ENCODE measurements at regions of chr3 and their contacts with region 1.

Region 1: GRCh38 chr3:170405101-170405500 is 13.6 kb upstream of the CLDN11 start:
- DNase-seq: no peak
- H3K4me3 ChIP-seq: no peak overlapping the region
- H3K4me3 Mint-ChIP-seq: no peak overlapping the region
- H3K27ac ChIP-seq: no peak overlapping the region
- H3K27ac Mint-ChIP-seq: no peak overlapping the region
- H3K4me1 ChIP-seq: no peaks in the 10 kb centered on the region
- H3K4me1 Mint-ChIP-seq: no peaks in the 10 kb centered on the region
- H3K27me3 ChIP-seq: no peaks in the 10 kb centered on the region
- H3K27me3 Mint-ChIP-seq: peaks cover 0 to 2% (median 0%) of the 10 kb centered on the region in 3 donors
- CTCF ChIP-seq: no peak

Region 2: DNA sequence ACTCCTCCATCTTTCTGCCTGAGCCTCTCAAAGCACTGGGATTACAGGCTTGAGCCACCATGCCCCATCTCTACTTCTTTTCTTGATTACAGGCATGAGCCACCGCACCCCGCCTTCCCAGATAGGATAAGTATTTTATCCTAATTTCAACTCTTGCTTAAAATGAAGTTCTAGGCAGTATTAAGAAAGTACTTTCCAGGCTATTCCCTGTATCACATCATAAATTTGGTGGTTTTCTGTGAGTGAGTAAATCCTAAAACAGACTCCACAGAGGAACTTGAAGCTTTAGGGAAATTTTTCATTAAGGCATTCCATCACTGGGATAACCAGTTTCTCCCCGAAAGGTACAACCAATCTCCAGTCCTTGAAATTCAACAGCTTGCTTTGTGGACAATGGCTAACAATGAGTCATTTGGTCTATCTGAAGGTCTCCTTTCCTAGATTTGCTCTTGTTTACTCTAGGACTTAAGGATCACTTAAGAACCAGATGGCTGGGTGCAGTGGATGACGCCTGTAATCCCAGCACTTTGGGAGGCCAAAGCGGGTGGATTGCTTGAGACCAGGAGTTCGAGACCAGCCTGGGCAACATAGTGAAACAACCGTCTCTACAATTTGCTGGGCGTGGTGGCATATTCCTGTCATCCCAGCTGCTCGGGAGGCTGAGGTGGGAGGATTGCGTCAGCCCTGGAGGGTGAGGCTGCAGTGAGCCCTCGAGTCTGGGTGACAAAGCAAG is 97.3 kb before region 1 on chr3:
- intact Hi-C with region 1: loop called (anchors 5 to 10 kb)
- DNase-seq: no peak
- H3K4me3 ChIP-seq: no peak overlapping the region
- H3K4me3 Mint-ChIP-seq: no peak overlapping the region
- H3K27ac ChIP-seq: no peak overlapping the region
- H3K27ac Mint-ChIP-seq: no peak overlapping the region
- H3K4me1 ChIP-seq: no peaks in the 10 kb centered on the region
- H3K4me1 Mint-ChIP-seq: peaks cover 6% of the 10 kb centered on the region
- H3K27me3 ChIP-seq: no peaks in the 10 kb centered on the region
- H3K27me3 Mint-ChIP-seq: peaks cover 0 to 2% (median 2%) of the 10 kb centered on the region in 3 donors
- CTCF ChIP-seq: no peak

Region 3: DNA sequence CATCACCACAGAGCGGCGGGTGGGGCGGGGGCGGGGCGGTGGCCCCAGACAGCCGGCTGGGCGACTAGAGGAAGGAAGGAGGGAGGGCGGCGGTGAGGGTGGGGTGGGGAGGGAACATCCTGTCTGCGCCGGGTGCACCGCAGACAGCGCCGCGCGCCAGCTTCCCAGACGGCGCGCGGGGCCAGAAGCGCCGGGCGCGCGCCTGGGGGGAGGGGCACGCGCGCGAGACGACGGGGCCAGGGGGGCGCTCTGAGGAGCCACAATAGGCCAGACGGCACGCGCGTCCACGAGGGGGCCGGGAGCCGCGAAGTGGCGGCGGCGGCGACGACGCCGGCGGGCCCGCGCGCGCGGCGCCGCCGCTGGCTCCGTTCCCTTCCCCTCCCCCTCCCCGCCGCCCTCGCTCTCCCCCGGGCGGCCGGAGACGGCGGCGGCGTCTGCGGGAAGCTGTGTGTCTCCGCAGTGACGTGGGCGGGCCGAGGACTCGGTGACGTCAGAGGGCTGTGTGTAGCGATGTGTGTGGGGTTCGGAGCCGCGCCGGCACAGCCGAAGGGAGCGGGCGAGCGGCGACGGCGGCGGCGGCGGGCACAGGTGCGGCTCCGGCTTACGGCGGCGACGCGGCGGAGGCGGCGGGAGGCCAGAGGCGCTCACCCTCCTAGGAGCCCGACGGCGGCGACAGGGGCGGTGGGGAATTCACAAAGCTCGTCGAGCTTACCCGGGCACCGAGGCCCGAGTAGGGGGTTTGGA is 47.8 kb before region 1 on chr3 and contains the start of gene SKIL:
- intact Hi-C with region 1: no loop called
- DNase-seq: peak; percentile 96 to 98 (median 97)
- H3K4me3 ChIP-seq: peak within 1 kb of the TSS; percentile 72 to 92 (median 83)
- H3K4me3 Mint-ChIP-seq: peak within 1 kb of the TSS; percentile 88 to 95
- H3K27ac ChIP-seq: peak within 1 kb of the TSS; percentile 98 to 99
- H3K27ac Mint-ChIP-seq: peak within 1 kb of the TSS; percentile 97 to 99 (median 98)
- H3K4me1 ChIP-seq: peaks cover 42 to 55% of the 10 kb centered on the region in 2 donors
- H3K4me1 Mint-ChIP-seq: peaks cover 51% of the 10 kb centered on the region
- H3K27me3 ChIP-seq: no peaks in the 10 kb centered on the region
- H3K27me3 Mint-ChIP-seq: peaks cover 0 to 15% (median 3%) of the 10 kb centered on the region in 3 donors
- CTCF ChIP-seq: no peak
- polyA plus RNA-seq, gene SKIL: 7.5 to 13.4 (median 9.2) TPM